Panc1 (cell line): ENCODE measurements at regions of chr2 and their contacts with region 1.

Region 1: GRCh38 chr2:202172439-202173211 is 65.8 kb downstream of the SUMO1 start:
- DNase-seq: no peak
- ATAC-seq: peak; percentile 72
- H3K4me3 ChIP-seq: 0 out of 4 replicates have a peak overlapping the region, but pooled peaks of 1 of the 2 experiments have one; percentile 1
- H3K27ac ChIP-seq: peak overlapping the region; percentile 18; the same call in 1 of the 2 replicates
- H3K4me1 ChIP-seq: no peaks in the 10 kb centered on the region; the same call in 1 of the 2 replicates
- H3K27me3 ChIP-seq: no peaks in the 10 kb centered on the region
- CTCF ChIP-seq: no peak

Region 2: GRCh38 chr2:201984800-201985525 is 187.7 kb before region 1 on chr2:
- CTCF ChIA-PET with region 1: no interaction called
- POLR2A ChIA-PET with region 1: interaction called, 11 read pairs
- in situ Hi-C with region 1: no loop called
- intact Hi-C with region 1: no loop called
- DNase-seq: no peak
- ATAC-seq: peak; percentile 27; the same call in 1 of the 2 replicates
- H3K4me3 ChIP-seq: no peak overlapping the region
- H3K27ac ChIP-seq: no peak overlapping the region
- H3K4me1 ChIP-seq: no peaks in the 10 kb centered on the region
- H3K27me3 ChIP-seq: no peaks in the 10 kb centered on the region
- CTCF ChIP-seq: no peak

Region 3: DNA sequence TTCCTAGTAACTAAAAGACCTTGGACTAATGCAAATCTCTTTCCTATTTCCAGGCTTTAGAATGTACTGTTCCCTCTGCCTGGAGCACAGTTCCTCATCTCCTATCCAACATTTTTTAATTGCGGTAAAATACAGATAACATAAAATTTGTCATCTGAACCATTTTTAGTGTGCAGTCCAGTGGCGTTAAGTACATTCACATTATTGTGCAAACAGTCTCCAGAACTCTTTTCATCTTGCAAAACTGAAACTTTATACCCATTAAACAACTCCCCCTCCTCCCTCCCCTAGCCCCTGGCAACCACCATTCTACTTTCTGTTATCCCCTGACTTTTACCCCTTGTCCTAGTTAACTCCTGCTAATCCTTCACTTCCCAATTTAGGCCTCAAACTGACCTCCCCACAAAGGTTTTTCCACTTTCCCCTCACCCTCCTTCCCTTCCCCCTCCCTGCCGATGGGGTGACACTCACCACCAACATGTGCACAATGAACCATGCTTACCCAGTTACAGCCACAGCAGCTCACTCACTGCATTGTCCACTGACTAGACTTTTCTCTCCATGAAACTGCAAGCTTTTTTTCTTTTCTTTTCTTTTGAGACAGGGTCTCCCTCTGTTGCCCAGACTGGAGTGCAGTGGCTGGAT is 44.8 kb before region 1 on chr2:
- CTCF ChIA-PET with region 1: no interaction called
- POLR2A ChIA-PET with region 1: interaction called, 13 read pairs
- in situ Hi-C with region 1: no loop called
- intact Hi-C with region 1: no loop called
- DNase-seq: no peak
- ATAC-seq: no peak
- H3K4me3 ChIP-seq: no peak overlapping the region
- H3K27ac ChIP-seq: no peak overlapping the region
- H3K4me1 ChIP-seq: no peaks in the 10 kb centered on the region
- H3K27me3 ChIP-seq: no peaks in the 10 kb centered on the region
- CTCF ChIP-seq: no peak

Region 4: GRCh38 chr2:202299712-202300111 is 127.1 kb after region 1 on chr2:
- CTCF ChIA-PET with region 1: no interaction called
- POLR2A ChIA-PET with region 1: no interaction called
- in situ Hi-C with region 1: no loop called
- intact Hi-C with region 1: no loop called
- DNase-seq: no peak
- ATAC-seq: no peak
- H3K4me3 ChIP-seq: no peak overlapping the region
- H3K27ac ChIP-seq: no peak overlapping the region
- H3K4me1 ChIP-seq: no peaks in the 10 kb centered on the region
- H3K27me3 ChIP-seq: no peaks in the 10 kb centered on the region
- CTCF ChIP-seq: no peak